H1 (cell line): ENCODE measurements at regions of chr1 and their contacts with region 1.

Region 1: DNA sequence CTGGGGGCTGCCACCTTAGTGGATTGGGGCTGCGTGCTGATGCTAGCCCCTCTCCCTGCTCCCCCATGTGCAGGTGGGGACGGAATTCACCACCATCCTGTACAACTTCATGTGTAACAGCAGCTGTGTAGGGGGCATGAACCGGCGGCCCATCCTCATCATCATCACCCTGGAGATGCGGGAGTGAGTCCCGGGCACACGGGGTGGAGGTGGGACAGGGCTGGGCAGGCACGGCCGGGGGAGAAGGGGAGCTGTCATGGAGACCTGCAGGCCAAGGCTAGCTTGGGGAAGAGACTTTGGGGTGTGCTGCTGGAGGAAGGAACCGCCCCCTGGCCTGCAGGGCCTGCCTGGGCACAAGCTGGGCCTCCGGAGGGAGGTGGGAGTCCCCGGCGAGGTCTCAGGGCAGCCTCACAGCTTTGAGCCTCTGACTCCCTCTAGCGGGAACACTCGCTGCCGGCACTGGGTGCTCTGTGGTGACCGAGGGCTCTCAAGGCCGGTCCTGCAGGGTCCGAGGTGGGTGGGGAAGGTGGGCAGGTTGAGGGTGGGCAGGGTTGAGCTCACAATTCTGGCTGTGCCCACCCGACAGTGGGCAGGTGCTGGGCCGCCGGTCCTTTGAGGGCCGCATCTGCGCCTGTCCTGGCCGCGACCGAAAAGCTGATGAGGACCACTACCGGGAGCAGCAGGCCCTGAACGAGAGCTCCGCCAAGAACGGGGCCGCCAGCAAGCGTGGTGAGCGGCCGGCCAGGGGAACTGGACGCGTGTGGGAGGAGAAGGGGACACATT is 25.0 kb upstream of the CCDC27 start:
- DNase-seq: peak in 1 of 2 experiments; percentile 83
- H3K4me3 ChIP-seq: no peak overlapping the region
- H3K27ac ChIP-seq: no peak overlapping the region
- H3K4me1 ChIP-seq: peaks cover 0 to 4% (median 2%) of the 10 kb centered on the region in 4 experiments; a peak in 4 of 7 replicates
- H3K27me3 ChIP-seq: no peaks in the 10 kb centered on the region; a peak in 3 of 7 replicates
- CTCF ChIP-seq: peak in 2 of 3 experiments; percentile 71 to 83; a peak in 3 of 4 replicates
- EP300 ChIP-seq: no peak
- POLR2A ChIP-seq: no peak
- RAD21 ChIP-seq: peak; percentile 63 to 74

Region 2: DNA sequence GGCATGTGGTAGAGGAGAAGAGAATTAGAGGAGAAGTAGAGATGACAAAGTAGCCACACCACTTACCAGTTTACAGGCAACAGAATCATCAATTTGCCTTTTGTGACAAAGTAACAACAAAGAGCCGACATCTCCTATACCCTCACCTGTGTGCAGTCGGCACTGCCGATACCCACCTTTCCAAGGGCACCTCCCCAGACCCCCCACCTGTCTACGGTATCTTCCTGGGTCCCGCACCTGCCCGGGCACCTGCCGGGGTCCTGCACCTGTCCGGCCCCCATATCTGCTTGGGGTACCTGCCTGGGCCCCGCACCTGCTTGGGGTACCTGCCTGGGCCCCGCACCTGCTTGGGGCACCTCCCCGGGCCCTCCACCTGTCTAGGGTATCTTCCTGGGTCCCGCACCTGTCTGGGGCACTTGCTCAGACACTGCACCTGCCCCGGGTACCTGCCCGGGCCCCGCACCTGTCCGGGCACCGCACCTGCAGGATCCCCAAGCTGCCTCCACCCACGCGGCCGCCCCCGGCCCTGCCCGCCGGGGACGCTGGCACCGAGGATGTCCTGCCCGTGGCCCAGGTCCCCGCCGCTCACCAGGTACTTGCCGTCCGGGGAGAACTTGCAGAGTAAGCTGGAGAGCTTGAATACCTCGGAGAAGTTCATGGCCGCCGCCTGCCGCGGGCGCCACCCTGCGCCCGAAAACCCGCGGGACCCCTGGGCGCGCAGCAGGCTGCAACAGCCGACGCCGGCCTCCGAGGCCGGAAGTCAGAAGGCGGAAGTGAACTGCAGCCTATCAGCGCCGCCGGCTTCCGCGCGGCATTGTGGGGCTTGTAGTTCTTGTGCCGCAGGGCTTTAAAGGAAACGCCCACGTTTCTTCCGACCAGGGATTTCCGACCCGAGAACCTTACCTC is 77.6 kb before region 1 on chr1 and contains the start of gene WRAP73:
- CTCF ChIA-PET with region 1: interaction called, 16 read pairs
- POLR2A ChIA-PET with region 1: no interaction called
- DNase-seq: peak; percentile 74 to 86
- H3K4me3 ChIP-seq: peak within 1 kb of the TSS; percentile 75 to 97 (median 86)
- H3K27ac ChIP-seq: no peak within 1 kb of the TSS
- H3K4me1 ChIP-seq: peaks cover 0 to 21% (median 3%) of the 10 kb centered on the region in 4 experiments; a peak in 5 of 7 replicates
- H3K27me3 ChIP-seq: peaks cover 42 to 48% (median 46%) of the 10 kb centered on the region in 4 experiments
- CTCF ChIP-seq: no peak
- EP300 ChIP-seq: no peak
- POLR2A ChIP-seq: no peak; a peak in 1 of 3 replicates
- RAD21 ChIP-seq: no peak
- total RNA-seq, gene WRAP73: 29.7 and 30.3 TPM in 2 replicates

Region 3: DNA sequence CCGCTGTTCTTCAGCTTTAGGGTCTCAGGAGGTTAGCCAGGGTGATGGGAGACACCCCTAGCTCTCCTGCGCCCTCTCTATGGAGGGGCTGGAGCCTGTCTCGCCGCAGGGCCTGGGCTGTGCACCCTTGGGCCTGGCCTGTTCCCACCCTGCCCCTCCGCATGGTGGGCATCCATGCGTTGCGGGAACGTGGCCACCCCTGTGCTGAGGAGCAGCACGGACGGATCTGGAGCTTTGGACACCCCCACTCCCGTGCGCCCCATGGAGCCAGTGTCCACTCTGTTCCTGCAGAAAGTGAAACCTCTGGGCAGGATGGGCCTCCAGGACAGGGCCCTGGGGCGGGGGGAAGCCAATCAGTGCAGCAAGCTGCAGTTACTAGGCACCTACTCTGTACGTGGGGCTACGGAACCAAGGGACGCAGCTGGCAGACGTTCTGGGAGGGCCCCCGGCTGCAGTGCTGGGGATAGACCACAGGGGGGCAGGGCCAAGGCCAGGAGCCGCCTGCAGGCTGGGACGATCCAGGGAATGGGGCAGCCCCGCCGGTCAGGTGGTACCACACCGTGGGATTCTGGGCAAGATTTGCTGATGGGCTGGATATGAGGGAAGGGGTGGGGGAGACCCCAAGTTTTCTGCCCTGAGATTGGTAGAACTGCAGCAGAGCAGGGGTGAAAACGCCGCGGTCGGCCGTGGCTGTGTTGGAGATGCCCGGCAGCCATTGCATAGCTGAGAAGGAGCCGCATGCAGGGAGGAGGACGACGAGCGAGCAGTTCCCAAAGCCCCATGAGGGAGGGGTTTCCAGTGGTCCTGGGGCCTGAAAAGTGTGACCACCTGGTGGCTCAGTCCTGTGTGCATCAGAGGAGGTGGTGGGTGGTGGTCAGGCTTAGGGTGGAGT is 31.7 kb before region 1 on chr1:
- CTCF ChIA-PET with region 1: interaction called, 45 read pairs
- POLR2A ChIA-PET with region 1: interaction called, 6 read pairs
- DNase-seq: peak in 1 of 2 experiments; percentile 93
- H3K4me3 ChIP-seq: no peak overlapping the region
- H3K27ac ChIP-seq: no peak overlapping the region
- H3K4me1 ChIP-seq: peaks cover 0 to 3% (median 1%) of the 10 kb centered on the region in 4 experiments; a peak in 2 of 7 replicates
- H3K27me3 ChIP-seq: peaks cover 0 to 7% (median 4%) of the 10 kb centered on the region in 4 experiments; a peak in 3 of 7 replicates
- CTCF ChIP-seq: peak in 2 of 3 experiments; percentile 82 to 93; a peak in 3 of 4 replicates
- EP300 ChIP-seq: no peak
- POLR2A ChIP-seq: no peak
- RAD21 ChIP-seq: peak; percentile 60 to 72

Region 4: GRCh38 chr1:3702990-3703728 is 24.1 kb before region 1 on chr1:
- CTCF ChIA-PET with region 1: interaction called, 45 read pairs
- POLR2A ChIA-PET with region 1: interaction called, 3 read pairs
- DNase-seq: no peak
- H3K4me3 ChIP-seq: no peak overlapping the region
- H3K27ac ChIP-seq: no peak overlapping the region
- H3K4me1 ChIP-seq: peaks cover 2 to 17% (median 13%) of the 10 kb centered on the region in 4 experiments
- H3K27me3 ChIP-seq: peaks cover 0 to 3% (median 3%) of the 10 kb centered on the region in 4 experiments; a peak in 4 of 7 replicates
- CTCF ChIP-seq: peak in 1 of 3 experiments; percentile 10; a peak in 1 of 4 replicates
- EP300 ChIP-seq: no peak
- POLR2A ChIP-seq: no peak
- RAD21 ChIP-seq: no peak

Region 5: DNA sequence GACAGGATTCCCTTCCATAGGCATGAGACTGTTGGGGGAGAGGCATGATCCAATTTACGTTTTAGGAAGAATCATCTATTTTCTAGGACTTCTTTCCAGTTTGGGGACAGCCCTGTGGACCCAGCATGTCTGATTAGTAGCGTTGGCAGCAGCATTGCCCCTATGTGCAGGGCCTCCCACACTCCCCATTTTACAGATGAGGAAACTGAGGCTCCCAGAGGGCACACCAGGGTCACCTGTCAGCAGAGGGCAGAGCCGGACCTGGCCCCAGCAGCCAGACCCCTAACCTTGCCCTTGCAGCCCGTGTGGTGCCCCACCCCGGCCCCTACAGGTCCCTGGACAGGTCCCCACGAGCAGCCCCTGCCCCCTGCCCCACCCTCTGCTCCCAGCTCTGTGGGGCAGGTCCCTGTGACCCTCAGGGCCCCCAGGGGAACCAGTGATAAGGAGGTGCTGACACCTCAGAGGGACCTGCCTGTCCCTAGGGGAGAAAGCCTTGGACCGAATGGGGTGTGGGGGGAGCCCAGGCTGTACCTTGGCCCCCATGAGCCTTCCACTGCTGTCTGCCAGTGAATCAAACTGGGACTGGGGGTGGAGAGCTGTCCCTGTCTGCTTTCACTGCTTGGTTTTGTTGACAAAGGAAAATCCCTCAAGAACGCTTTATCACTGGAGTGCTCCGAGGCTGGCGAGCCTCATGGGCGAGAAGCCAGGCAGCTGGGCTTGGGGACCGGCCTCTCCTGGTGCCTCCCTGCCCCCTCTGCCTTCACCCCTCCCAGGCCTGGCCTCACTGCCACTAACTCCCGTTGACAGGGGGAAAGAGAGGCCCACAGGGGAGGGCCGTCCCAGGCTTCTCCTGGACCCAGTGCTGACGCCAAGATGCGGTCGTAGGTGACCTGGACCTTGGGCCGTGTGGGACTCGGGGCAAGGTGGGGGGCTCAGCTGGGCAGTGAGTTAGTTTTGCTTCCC is 14.4 kb before region 1 on chr1:
- CTCF ChIA-PET with region 1: interaction called, 49 read pairs
- POLR2A ChIA-PET with region 1: interaction called, 5 read pairs
- DNase-seq: no peak
- H3K4me3 ChIP-seq: no peak overlapping the region
- H3K27ac ChIP-seq: no peak overlapping the region
- H3K4me1 ChIP-seq: peaks cover 4 to 28% (median 20%) of the 10 kb centered on the region in 4 experiments
- H3K27me3 ChIP-seq: peaks cover 0 to 17% (median 7%) of the 10 kb centered on the region in 4 experiments; a peak in 4 of 7 replicates
- CTCF ChIP-seq: no peak
- EP300 ChIP-seq: no peak
- POLR2A ChIP-seq: no peak
- RAD21 ChIP-seq: no peak